T-cell (primary cell): ENCODE measurements at regions of chr9 and their contacts with region 1.

Region 1: GRCh38 chr9:83976372-83976771 is 3.6 kb downstream of the HNRNPK start:
- DNase-seq: no peak
- ATAC-seq: no peak
- H3K4me3 ChIP-seq: no peak overlapping the region
- H3K4me3 Mint-ChIP-seq: peak overlapping the region in 2 of 3 donors; percentile 48 to 99
- H3K27ac ChIP-seq: no peak overlapping the region
- H3K27ac Mint-ChIP-seq: peak overlapping the region in 1 of 2 donors; percentile 81
- H3K4me1 ChIP-seq: peaks cover 14 to 27% of the 10 kb centered on the region in 2 experiments
- H3K4me1 Mint-ChIP-seq: peaks cover 61 to 68% (median 65%) of the 10 kb centered on the region in 3 donors
- H3K27me3 ChIP-seq: no peaks in the 10 kb centered on the region
- H3K27me3 Mint-ChIP-seq: no peaks in the 10 kb centered on the region

Region 2: DNA sequence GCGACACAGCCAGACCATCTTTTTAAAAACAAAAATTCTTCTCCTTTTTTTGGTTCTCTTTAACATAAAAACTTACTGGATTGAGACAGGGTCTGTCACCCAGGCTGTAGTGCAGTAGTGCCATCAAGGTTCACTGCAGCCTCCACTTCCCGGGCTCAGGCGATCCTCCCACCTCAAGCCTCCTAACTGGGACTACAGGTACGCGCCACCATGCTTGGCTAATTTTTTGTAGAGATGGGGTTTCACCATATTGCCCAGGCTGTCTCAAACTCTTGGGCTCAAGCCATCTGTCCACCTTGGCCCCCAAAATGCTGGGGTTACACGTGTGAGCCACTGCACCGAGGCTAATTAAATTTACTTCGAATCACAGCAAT is 10.2 kb before region 1 on chr9:
- CTCF ChIA-PET with region 1: interaction called, 3 to 6 read pairs
- POLR2A ChIA-PET with region 1: interaction called, 3 to 10 read pairs
- DNase-seq: no peak
- ATAC-seq: peak in 3 of 4 experiments; percentile 14 to 22 (median 15)
- H3K4me3 ChIP-seq: no peak overlapping the region
- H3K4me3 Mint-ChIP-seq: peak overlapping the region in 1 of 3 donors; percentile 6
- H3K27ac ChIP-seq: no peak overlapping the region
- H3K27ac Mint-ChIP-seq: peak overlapping the region in 1 of 2 donors; percentile 50
- H3K4me1 ChIP-seq: no peaks in the 10 kb centered on the region
- H3K4me1 Mint-ChIP-seq: peaks cover 11 to 17% (median 12%) of the 10 kb centered on the region in 3 donors
- H3K27me3 ChIP-seq: no peaks in the 10 kb centered on the region
- H3K27me3 Mint-ChIP-seq: no peaks in the 10 kb centered on the region

Region 3: DNA sequence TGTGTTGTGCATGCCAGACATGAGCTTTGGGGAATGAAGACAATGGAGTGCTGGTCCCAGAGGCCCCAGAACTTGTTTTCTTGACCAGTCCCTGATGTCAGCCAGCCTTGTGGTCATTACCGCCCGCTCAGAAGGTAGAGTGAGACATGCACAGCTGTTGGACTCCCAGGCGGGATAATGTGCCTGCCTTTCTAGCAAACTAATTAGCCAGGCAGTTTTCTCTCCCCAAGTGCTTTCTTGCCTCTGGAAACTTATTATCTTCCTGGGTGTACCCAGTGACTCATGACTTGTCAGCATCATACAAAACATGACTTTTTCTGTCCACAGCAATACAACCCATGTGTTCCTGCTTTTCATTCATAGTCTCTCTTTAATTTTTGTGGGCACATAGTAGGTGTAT is 135.4 kb after region 1 on chr9:
- CTCF ChIA-PET with region 1: no interaction called
- POLR2A ChIA-PET with region 1: no interaction called
- DNase-seq: no peak
- ATAC-seq: no peak
- H3K4me3 ChIP-seq: no peak overlapping the region
- H3K4me3 Mint-ChIP-seq: no peak overlapping the region
- H3K27ac ChIP-seq: no peak overlapping the region
- H3K27ac Mint-ChIP-seq: no peak overlapping the region
- H3K4me1 ChIP-seq: peaks cover 0 to 5% of the 10 kb centered on the region in 2 experiments
- H3K4me1 Mint-ChIP-seq: peaks cover 14 to 20% (median 20%) of the 10 kb centered on the region in 3 donors
- H3K27me3 ChIP-seq: no peaks in the 10 kb centered on the region
- H3K27me3 Mint-ChIP-seq: peaks cover 17 to 29% of the 10 kb centered on the region in 2 donors